Activated CD4-positive, alpha-beta memory T cell treated with anti-CD3 and anti-CD28 coated beads for 36 hours (primary cell): ENCODE measurements at regions of chr9 and their contacts with region 1.

Region 1: DNA sequence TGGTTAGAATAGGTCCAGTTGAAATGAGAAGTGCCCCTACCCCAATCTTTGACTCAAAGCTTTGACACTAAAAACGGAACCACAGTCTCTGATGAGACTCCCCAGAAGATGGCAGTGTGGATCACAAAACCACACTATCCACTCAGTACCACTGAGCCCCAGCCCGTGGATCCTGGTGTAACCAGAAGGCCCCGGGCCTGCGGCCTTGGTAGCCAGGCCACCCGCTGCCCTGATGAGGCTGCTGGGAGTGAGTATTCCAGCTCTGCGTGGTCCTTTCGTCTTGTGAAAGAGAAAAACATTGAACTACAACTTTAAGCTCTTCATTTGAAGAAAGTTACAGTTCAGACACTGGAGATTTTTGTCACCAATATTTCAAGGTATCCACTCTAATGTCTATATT is 42.2 kb upstream of the FBP1 start:
- DNase-seq: peak; percentile 68
- H3K4me3 Mint-ChIP-seq: no peak overlapping the region
- H3K27ac Mint-ChIP-seq: no peak overlapping the region
- H3K4me1 Mint-ChIP-seq: no peaks in the 10 kb centered on the region
- H3K27me3 Mint-ChIP-seq: peaks cover 9% of the 10 kb centered on the region

Region 2: GRCh38 chr9:94490465-94490864 is 191.0 kb before region 1 on chr9:
- CTCF ChIA-PET with region 1: no interaction called
- POLR2A ChIA-PET with region 1: no interaction called
- intact Hi-C with region 1: no loop called
- DNase-seq: no peak
- H3K4me3 Mint-ChIP-seq: no peak overlapping the region
- H3K27ac Mint-ChIP-seq: no peak overlapping the region
- H3K4me1 Mint-ChIP-seq: no peaks in the 10 kb centered on the region
- H3K27me3 Mint-ChIP-seq: peaks cover 7% of the 10 kb centered on the region

Region 3: DNA sequence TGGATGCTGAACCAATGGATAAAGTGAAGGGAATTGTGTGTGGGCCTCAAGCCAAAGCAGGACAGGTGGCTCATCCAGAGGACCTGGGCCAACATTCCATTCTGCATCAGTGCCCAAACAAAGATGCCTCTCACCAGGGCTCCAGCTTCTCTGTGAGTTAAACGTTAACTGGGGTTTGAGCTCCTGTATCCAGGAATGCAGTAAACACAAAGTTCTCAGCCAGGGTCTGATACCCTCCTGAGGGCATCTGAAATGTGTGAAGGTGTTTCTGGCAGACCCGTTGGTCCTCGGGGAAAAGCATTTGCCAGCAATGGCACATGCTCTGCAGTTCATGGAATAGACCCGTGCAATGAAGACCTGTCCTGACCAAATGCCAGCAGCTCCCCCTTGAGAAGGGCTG is 11.1 kb after region 1 on chr9:
- CTCF ChIA-PET with region 1: interaction called, 12 read pairs
- POLR2A ChIA-PET with region 1: no interaction called
- intact Hi-C with region 1: no loop called
- DNase-seq: no peak
- H3K4me3 Mint-ChIP-seq: no peak overlapping the region
- H3K27ac Mint-ChIP-seq: no peak overlapping the region
- H3K4me1 Mint-ChIP-seq: no peaks in the 10 kb centered on the region
- H3K27me3 Mint-ChIP-seq: peaks cover 4% of the 10 kb centered on the region

Region 4: GRCh38 chr9:94767331-94768072 is 86.0 kb after region 1 on chr9:
- CTCF ChIA-PET with region 1: interaction called, 12 read pairs
- POLR2A ChIA-PET with region 1: no interaction called
- intact Hi-C with region 1: no loop called
- DNase-seq: no peak
- H3K4me3 Mint-ChIP-seq: no peak overlapping the region
- H3K27ac Mint-ChIP-seq: no peak overlapping the region
- H3K4me1 Mint-ChIP-seq: peaks cover 21% of the 10 kb centered on the region
- H3K27me3 Mint-ChIP-seq: no peaks in the 10 kb centered on the region

Region 5: GRCh38 chr9:94783102-94783664 is 101.7 kb after region 1 on chr9:
- CTCF ChIA-PET with region 1: interaction called, 21 read pairs
- POLR2A ChIA-PET with region 1: no interaction called
- intact Hi-C with region 1: no loop called
- DNase-seq: peak; percentile 53
- H3K4me3 Mint-ChIP-seq: no peak overlapping the region
- H3K27ac Mint-ChIP-seq: no peak overlapping the region
- H3K4me1 Mint-ChIP-seq: peaks cover 14% of the 10 kb centered on the region
- H3K27me3 Mint-ChIP-seq: no peaks in the 10 kb centered on the region

Region 6: DNA sequence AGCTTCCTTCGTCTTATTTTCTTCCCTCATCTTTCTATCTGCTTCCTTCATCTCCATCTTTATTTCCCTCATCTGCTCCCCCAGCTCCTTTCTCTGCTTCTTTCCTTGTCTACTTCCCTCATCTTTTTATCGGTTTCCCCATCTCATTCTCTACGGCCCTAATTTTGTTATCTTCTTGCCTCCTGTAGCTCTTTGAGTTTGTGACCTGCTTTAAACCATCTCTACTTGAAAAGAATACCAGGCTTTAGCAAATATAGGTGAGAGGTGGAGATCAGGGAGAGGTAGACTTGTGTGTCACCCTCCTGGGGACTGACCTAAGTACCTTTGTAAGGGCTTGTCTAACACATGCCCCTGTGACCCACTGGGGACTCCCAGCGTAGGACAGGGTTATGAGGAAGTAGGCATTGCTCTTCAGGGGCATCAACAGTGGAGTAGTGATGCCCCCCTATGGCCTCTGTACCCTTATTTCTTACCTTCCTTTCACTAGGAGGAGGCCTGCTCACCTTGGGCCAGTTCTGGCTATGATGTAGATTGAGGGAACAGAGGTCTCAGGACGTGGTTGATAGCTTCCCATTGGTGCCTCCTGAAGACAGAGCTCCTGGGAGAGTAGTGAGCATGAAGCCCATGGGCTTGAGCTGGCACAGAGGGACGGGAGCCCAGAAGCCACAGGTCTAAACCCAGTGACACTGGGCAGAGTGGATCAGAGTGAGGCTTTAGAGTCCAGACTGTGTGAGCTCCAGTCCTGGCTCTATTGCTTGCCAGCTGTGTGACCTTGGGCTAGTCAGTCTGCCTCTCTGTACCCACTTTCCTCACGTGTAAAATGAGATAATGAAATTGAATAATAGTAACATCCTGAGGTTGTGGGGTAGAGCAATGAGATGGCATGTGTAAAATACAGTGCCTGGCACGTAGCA is 236.6 kb after region 1 on chr9:
- CTCF ChIA-PET with region 1: interaction called, 10 read pairs
- POLR2A ChIA-PET with region 1: no interaction called
- intact Hi-C with region 1: no loop called
- DNase-seq: no peak
- H3K4me3 Mint-ChIP-seq: no peak overlapping the region
- H3K27ac Mint-ChIP-seq: no peak overlapping the region
- H3K4me1 Mint-ChIP-seq: no peaks in the 10 kb centered on the region
- H3K27me3 Mint-ChIP-seq: no peaks in the 10 kb centered on the region